ENCODE measurements at regions of chr5 and their contacts with region 1.

Region 1: GRCh38 chr5:82356808-82357671 is 78.9 kb upstream of the RPS23 start:
- DNase-seq: peak; percentile 75 to 92 (median 82)
- ATAC-seq: peak; percentile 97
- H3K4me3 ChIP-seq: peak overlapping the region; percentile 14
- H3K27ac ChIP-seq: peak overlapping the region; percentile 81
- H3K4me1 ChIP-seq: peaks cover 0 to 23% of the 10 kb centered on the region in 2 experiments; a peak in 4 of 5 replicates
- H3K27me3 ChIP-seq: no peaks in the 10 kb centered on the region
- CTCF ChIP-seq: no peak
- EP300 ChIP-seq: peak; percentile 87
- POLR2A ChIP-seq: peak; percentile 71
- RAD21 ChIP-seq: peak in 1 of 2 experiments; percentile 21; a peak in 2 of 4 replicates

Region 2: DNA sequence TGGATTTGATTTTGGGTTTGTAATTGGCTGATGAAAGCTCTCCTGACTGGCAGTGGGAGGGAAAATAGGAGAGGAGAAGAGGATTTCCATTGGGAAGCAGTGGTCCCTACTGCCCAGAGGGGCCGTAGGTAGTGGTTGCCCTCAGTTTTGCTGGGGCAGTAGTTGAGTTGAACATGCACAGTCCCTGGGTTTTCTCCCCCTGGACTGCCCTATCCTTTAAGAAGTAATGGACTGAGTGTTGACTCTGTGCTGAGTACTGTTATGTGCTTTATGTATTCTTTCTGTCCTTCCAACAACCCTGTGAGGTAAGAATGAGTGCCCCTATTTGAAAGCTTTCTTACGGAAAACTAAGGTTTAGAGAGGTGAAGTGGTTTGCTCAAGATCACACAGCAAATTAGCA is 32.3 kb after region 1 on chr5:
- CTCF ChIA-PET with region 1: no interaction called
- POLR2A ChIA-PET with region 1: interaction called, 4 read pairs
- in situ Hi-C with region 1: no loop called
- intact Hi-C with region 1: loop called (anchors 1 kb)
- DNase-seq: no peak
- ATAC-seq: peak; percentile 70
- H3K4me3 ChIP-seq: 0 out of 2 replicates have a peak overlapping the region, but pooled peaks have one; percentile 6
- H3K27ac ChIP-seq: peak overlapping the region; percentile 80
- H3K4me1 ChIP-seq: peaks cover 13 to 22% of the 10 kb centered on the region in 2 experiments
- H3K27me3 ChIP-seq: no peaks in the 10 kb centered on the region
- CTCF ChIP-seq: no peak
- EP300 ChIP-seq: no peak
- POLR2A ChIP-seq: no peak
- RAD21 ChIP-seq: no peak

Region 3: GRCh38 chr5:83556190-83556589 is 1199.2 kb after region 1 on chr5:
- CTCF ChIA-PET with region 1: no interaction called
- POLR2A ChIA-PET with region 1: no interaction called
- in situ Hi-C with region 1: loop called (anchors 5 kb)
- intact Hi-C with region 1: loop called (anchors 5 kb)
- DNase-seq: no peak
- ATAC-seq: no peak
- H3K4me3 ChIP-seq: no peak overlapping the region
- H3K27ac ChIP-seq: no peak overlapping the region
- H3K4me1 ChIP-seq: no peaks in the 10 kb centered on the region
- H3K27me3 ChIP-seq: no peaks in the 10 kb centered on the region
- CTCF ChIP-seq: no peak
- EP300 ChIP-seq: no peak
- POLR2A ChIP-seq: no peak
- RAD21 ChIP-seq: no peak

Measured in K562 (cell line).